H1 (cell line): ENCODE measurements at regions of chr1 and their contacts with region 1.

Region 1: GRCh38 chr1:201828820-201829774 is at the start of gene IPO9:
- DNase-seq: peak; percentile 82 to 99
- H3K4me3 ChIP-seq: peak within 1 kb of the TSS; percentile 79 to 100 (median 98)
- H3K27ac ChIP-seq: peak within 1 kb of the TSS; percentile 96
- H3K4me1 ChIP-seq: peaks cover 0 to 5% (median 1%) of the 10 kb centered on the region in 4 experiments; a peak in 3 of 7 replicates
- H3K27me3 ChIP-seq: no peaks in the 10 kb centered on the region
- CTCF ChIP-seq: peak; percentile 77 to 97 (median 80)
- EP300 ChIP-seq: no peak
- POLR2A ChIP-seq: peak; percentile 42 to 85
- RAD21 ChIP-seq: peak; percentile 19 to 29; a peak in 1 of 4 replicates
- total RNA-seq, gene IPO9: 122 and 124 TPM in 2 replicates

Region 2: GRCh38 chr1:201813226-201813625 is 15.9 kb before region 1 on chr1:
- CTCF ChIA-PET with region 1: interaction called, 19 read pairs
- POLR2A ChIA-PET with region 1: interaction called, 3 read pairs
- DNase-seq: no peak
- H3K4me3 ChIP-seq: no peak overlapping the region
- H3K27ac ChIP-seq: no peak overlapping the region
- H3K4me1 ChIP-seq: no peaks in the 10 kb centered on the region
- H3K27me3 ChIP-seq: no peaks in the 10 kb centered on the region
- CTCF ChIP-seq: no peak
- EP300 ChIP-seq: no peak
- POLR2A ChIP-seq: no peak
- RAD21 ChIP-seq: no peak

Region 3: DNA sequence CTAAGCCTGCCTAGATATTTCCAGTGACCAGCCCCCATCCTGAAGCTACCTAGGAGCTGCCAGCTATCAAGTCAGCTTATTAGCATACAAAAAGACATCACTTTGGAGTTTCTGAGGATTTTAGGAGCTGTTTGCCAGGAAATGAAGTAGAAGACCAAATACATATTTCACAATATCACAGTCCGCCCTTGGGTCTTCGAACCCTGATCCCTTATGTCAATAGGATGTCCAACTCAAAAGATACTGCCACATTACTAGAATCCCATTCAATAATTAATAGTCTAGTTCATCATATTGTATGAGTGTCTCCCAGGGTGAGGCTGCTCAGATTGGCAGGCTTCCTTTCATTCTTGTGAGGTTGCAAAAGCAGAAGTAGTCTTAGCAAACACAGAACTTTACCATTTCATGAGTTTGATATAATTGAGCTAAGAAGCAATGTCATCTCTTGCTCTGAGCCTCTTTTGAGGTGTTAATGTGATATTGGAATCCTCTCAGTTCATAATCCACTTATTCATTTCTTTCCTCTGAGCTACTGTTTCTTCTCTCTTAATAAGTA is 13.5 kb after region 1 on chr1:
- CTCF ChIA-PET with region 1: interaction called, 6 read pairs
- POLR2A ChIA-PET with region 1: interaction called, 11 read pairs
- DNase-seq: no peak
- H3K4me3 ChIP-seq: no peak overlapping the region
- H3K27ac ChIP-seq: no peak overlapping the region
- H3K4me1 ChIP-seq: peaks cover 0 to 9% (median 2%) of the 10 kb centered on the region in 4 experiments; a peak in 3 of 7 replicates
- H3K27me3 ChIP-seq: no peaks in the 10 kb centered on the region
- CTCF ChIP-seq: no peak
- EP300 ChIP-seq: no peak
- POLR2A ChIP-seq: no peak
- RAD21 ChIP-seq: no peak